MCF 10A (cell line): ENCODE measurements at regions of chr7 and their contacts with region 1.

Region 1: DNA sequence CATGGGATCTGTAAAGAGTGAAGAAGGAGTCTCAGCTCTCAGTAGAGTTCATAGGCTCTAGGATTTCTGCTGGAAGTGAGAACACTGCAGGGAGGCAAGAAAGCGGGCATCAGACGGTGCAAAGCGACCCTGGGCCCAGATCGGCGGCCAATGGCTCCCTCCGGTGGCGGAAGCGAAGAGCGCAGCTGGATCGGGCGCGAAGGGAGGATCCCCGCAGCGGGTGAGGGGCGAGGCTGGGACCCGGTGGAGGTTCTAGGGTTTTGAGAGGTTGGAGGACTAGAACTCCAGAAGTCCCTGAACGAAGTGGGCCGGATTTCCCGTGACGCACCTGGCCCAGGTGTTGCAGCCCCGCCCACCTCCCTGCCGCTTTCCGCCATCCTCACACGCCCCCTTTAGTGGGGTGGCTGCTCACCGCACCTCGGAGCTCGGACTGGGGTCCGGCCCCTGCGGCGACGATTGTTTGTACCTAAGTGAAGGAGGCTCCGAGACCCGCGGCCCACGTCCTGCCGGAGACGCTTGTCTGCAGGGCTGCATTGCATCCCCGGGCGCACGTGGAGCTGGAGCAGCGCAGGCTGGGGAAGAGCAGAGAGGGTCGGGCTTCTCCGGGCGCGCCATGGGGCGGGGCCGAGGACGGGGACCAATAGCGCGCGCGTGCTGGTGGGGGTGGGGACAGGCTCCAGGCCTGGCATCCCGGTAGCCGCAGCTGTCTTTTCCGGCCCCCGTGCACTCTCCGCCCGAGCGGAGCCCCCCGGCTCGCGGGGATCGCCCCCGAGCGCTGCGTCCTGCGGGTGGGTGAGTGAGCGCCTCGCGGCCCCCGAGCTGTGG is at the start of gene SLC12A9:
- DNase-seq: peak; percentile 90
- H3K4me3 Mint-ChIP-seq: peak within 1 kb of the TSS; percentile 90
- H3K27ac Mint-ChIP-seq: peak within 1 kb of the TSS; percentile 22
- H3K4me1 Mint-ChIP-seq: peaks cover 6% of the 10 kb centered on the region
- H3K27me3 Mint-ChIP-seq: no peaks in the 10 kb centered on the region
- CTCF ChIP-seq: peak; percentile 95
- total RNA-seq, gene SLC12A9: 19.2 and 21.0 TPM in 2 replicates

Region 2: GRCh38 chr7:100705753-100706671 is 146.2 kb before region 1 on chr7 and contains the start of gene POP7:
- CTCF ChIA-PET with region 1: interaction called, 49 read pairs
- POLR2A ChIA-PET with region 1: interaction called, 51 read pairs
- intact Hi-C with region 1: loop called (anchors 1 kb)
- DNase-seq: peak; percentile 98
- H3K4me3 Mint-ChIP-seq: peak within 1 kb of the TSS; percentile 95
- H3K27ac Mint-ChIP-seq: peak within 1 kb of the TSS; percentile 93
- H3K4me1 Mint-ChIP-seq: peaks cover 10% of the 10 kb centered on the region
- H3K27me3 Mint-ChIP-seq: peaks cover 10% of the 10 kb centered on the region
- CTCF ChIP-seq: no peak
- total RNA-seq, gene POP7: 49.0 and 59.2 TPM in 2 replicates

Region 3: GRCh38 chr7:100726996-100727761 is 125.1 kb before region 1 on chr7:
- CTCF ChIA-PET with region 1: interaction called, 19 read pairs
- POLR2A ChIA-PET with region 1: interaction called, 3 read pairs
- intact Hi-C with region 1: no loop called
- DNase-seq: no peak
- H3K4me3 Mint-ChIP-seq: no peak overlapping the region
- H3K27ac Mint-ChIP-seq: no peak overlapping the region
- H3K4me1 Mint-ChIP-seq: peaks cover 12% of the 10 kb centered on the region
- H3K27me3 Mint-ChIP-seq: no peaks in the 10 kb centered on the region
- CTCF ChIP-seq: no peak

Region 4: DNA sequence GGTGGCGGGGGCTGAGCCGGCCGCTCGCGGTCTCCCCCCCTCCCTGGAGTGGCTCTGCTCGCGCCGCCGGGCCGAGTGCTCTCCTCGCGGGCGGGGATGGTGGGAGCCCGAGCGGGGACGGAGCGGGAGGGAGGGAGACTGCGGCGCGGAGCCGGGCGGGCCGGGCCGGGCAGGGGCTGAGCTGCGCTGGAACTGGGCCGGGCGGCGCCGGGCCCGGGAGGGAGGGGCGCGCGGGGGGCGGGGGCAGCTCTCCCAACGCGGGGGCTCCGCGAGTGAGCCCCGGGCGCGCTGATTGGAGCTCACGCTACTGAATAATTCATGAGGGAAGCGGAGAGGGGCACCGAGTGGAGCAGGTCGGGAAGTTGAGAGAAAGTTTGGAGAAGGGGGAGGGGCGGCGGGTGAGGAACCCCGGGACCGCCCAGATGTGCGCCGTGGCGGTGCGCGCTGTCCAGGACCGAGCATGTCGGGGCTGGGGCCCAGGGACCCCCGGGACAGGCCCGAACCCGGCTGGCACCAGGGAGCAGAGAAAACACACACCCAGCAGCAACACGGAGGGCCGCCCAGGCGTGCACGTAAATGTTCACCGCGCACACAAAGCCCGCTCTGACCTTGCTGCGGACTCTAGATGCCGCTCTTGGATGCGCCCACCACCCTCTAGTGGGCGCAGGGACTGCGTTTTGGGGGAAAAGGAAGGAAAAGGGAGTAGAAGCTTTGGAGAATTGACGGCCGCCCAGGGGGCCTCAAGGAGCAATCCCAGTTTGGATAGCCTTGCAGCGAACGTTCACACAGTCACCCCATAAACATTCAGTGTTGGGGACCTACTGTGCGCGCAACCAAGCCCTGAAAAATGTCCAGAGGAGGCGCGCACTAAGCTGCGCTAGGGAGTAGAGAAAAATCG is 24.7 kb before region 1 on chr7 and contains the start of gene EPHB4:
- CTCF ChIA-PET with region 1: interaction called, 8 read pairs
- POLR2A ChIA-PET with region 1: interaction called, 8 read pairs
- intact Hi-C with region 1: loop called (anchors 1 kb)
- DNase-seq: peak; percentile 80
- H3K4me3 Mint-ChIP-seq: peak within 1 kb of the TSS; percentile 96
- H3K27ac Mint-ChIP-seq: peak within 1 kb of the TSS; percentile 86
- H3K4me1 Mint-ChIP-seq: peaks cover 21% of the 10 kb centered on the region
- H3K27me3 Mint-ChIP-seq: no peaks in the 10 kb centered on the region
- CTCF ChIP-seq: peak; percentile 20
- total RNA-seq, gene EPHB4: 48.8 and 51.3 TPM in 2 replicates

Region 5: DNA sequence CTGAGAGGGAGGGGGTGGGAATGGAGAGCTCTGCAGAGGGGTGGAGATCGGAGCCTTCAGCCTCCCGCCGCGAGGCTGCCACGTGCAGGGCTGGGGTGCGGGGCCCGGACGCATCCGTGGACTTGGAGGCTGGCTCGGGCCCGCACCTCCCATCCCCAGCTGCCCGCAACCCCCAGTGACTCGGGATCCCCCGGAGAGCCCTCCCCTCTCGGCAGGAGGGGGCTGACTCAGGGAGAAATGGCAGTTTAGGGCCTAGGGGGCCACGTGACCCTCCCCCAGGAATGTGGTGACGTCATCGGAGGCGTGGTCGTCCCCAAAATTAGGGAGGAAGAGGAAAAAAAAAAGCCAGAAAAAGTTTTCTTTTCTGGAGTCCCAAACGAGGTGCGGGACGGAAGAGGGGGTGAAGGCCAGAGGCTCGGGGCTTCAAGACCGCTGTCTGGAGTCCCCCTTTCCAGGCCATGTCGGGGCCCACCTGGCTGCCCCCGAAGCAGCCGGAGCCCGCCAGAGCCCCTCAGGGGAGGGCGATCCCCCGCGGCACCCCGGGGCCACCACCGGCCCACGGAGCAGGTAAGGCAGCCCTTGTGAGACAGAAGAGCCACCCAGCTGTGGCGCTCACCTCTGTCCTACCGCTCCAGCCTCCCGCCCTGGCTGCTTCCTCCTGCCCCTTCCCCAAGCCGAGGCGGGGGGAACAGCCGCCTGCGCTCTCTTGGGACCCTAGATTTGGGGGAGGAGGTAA is 14.9 kb after region 1 on chr7 and contains the start of gene TRIP6:
- CTCF ChIA-PET with region 1: interaction called, 4 read pairs
- POLR2A ChIA-PET with region 1: interaction called, 19 read pairs
- intact Hi-C with region 1: no loop called
- DNase-seq: peak; percentile 95
- H3K4me3 Mint-ChIP-seq: peak within 1 kb of the TSS; percentile 85
- H3K27ac Mint-ChIP-seq: peak within 1 kb of the TSS; percentile 99
- H3K4me1 Mint-ChIP-seq: peaks cover 6% of the 10 kb centered on the region
- H3K27me3 Mint-ChIP-seq: no peaks in the 10 kb centered on the region
- CTCF ChIP-seq: no peak
- total RNA-seq, gene TRIP6: 106 and 132 TPM in 2 replicates

Region 6: DNA sequence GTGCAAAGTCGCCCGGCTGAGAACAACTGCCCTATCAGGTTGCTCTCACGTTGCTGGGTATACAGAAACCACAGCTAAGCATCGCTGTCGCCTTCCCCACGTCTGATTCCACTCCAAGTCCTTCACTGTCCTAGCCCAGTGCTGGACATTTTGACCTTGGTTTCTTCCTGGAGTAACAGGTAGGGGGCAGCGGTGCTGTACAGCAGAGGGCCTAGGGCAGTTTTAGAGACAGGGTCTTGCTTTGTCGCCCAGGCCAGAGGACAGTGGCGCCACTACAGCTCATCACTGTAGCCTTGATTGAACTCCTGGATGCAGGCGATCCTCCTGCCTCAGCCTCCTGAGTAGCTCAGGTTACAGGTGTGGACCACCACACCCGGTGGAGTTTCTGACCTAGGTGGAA is 382.8 kb after region 1 on chr7:
- CTCF ChIA-PET with region 1: no interaction called
- POLR2A ChIA-PET with region 1: no interaction called
- intact Hi-C with region 1: no loop called
- DNase-seq: no peak
- H3K4me3 Mint-ChIP-seq: no peak overlapping the region
- H3K27ac Mint-ChIP-seq: no peak overlapping the region
- H3K4me1 Mint-ChIP-seq: peaks cover 5% of the 10 kb centered on the region
- H3K27me3 Mint-ChIP-seq: no peaks in the 10 kb centered on the region
- CTCF ChIP-seq: no peak